Left lung (tissue), 14 donors: ENCODE measurements at regions of chr19 and their contacts with region 1.

Region 1: DNA sequence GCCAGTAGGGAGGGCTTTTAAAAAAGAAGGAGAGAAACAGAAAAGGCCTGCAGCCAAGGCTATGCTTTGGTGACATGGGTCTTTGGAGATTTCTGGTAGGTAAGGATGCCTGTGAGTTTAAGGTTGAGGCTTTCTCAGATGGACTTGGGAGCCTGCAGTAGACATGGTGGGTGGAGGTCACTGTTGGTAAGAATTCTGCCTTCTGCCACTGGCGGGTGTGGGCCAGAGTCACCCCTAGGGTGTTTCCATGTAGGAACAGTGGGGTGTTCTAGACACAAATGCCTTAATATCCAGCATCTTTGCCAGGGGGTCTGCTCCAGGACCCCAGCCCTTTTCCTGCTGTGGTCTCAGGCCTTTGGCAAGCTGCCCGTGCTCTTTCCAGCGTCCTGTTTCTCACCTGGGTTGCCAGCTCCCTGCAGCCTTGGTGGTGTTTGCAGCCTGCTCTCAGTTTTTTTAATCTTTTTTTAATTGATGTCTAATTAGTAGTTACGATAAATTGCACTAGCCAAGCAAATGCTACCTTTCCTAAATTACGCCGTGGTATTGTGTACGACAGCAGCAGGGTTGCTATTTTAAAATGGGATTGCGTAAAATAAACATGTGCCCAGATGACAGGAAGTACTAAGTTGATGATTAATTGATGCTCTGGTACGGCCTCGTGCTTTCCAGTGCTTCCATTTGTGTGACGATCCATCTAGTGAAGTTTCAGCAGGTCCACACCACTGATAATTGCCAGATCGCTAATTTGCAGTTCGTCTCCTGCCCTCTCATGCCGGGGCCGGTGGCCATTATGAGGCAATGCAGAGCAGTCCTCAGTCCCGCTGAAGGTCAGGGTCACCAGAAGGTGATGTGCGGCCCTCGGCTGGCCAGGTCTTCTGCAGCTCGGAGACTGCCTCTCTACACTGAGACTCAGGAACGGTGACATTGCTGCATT is 35.3 kb upstream of the NPAS1 start:
- DNase-seq: no peak
- ATAC-seq: peak; percentile 39
- H3K4me3 ChIP-seq: no peak overlapping the region
- H3K27ac ChIP-seq: peak overlapping the region in 1 of 2 donors; percentile 5
- H3K4me1 ChIP-seq: peaks cover 5 to 49% of the 10 kb centered on the region in 2 donors
- H3K27me3 ChIP-seq: no peaks in the 10 kb centered on the region
- CTCF ChIP-seq: no peak

Region 2: DNA sequence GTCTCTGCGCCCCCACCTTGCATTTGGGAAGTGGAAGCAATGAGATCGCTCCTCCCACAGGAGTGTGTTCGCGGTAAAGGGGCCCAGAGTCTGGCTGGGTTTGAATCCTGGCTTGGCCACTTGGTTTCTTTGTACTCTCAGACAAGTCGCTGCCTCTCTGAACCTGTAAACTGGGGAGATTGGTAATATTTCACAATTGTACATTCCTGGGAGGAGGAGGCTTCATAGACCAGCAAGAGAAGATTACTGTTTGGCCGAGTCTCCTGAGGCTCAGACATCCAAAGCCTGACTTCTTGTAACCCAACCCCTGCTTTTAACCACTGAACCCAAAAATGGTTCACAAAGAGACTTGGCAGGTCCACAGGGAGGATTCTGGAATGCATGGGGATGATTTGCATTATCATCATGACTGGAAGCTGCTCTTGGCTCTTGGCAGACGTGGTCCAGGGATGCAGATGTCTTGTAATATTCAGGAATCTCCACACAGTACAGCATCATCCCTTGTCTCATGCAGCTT is 224.5 kb before region 1 on chr19:
- intact Hi-C with region 1: loop called in 1 of 2 experiments (anchors 5 kb)
- DNase-seq: no peak
- ATAC-seq: peak; percentile 5
- H3K4me3 ChIP-seq: no peak overlapping the region
- H3K27ac ChIP-seq: no peak overlapping the region
- H3K4me1 ChIP-seq: peaks cover 6 to 29% of the 10 kb centered on the region in 2 donors
- H3K27me3 ChIP-seq: no peaks in the 10 kb centered on the region
- CTCF ChIP-seq: no peak

Region 3: GRCh38 chr19:46904114-46905060 is 80.0 kb before region 1 on chr19:
- intact Hi-C with region 1: no loop called
- DNase-seq: peak in 1 of 4 donors; percentile 64
- ATAC-seq: no peak
- H3K4me3 ChIP-seq: no peak overlapping the region
- H3K27ac ChIP-seq: peak overlapping the region; percentile 18 to 67
- H3K4me1 ChIP-seq: peaks cover 29 to 39% of the 10 kb centered on the region in 2 donors
- H3K27me3 ChIP-seq: no peaks in the 10 kb centered on the region
- CTCF ChIP-seq: no peak

Region 4: GRCh38 chr19:46924874-46925547 is 59.3 kb before region 1 on chr19:
- intact Hi-C with region 1: loop called in 1 of 2 experiments (anchors 10 kb)
- DNase-seq: no peak
- ATAC-seq: peak; percentile 85
- H3K4me3 ChIP-seq: no peak overlapping the region
- H3K27ac ChIP-seq: peak overlapping the region; percentile 1 to 60
- H3K4me1 ChIP-seq: peaks cover 27 to 34% of the 10 kb centered on the region in 2 donors
- H3K27me3 ChIP-seq: no peaks in the 10 kb centered on the region
- CTCF ChIP-seq: no peak

Region 5: GRCh38 chr19:47047763-47048405 is 63.5 kb after region 1 on chr19:
- intact Hi-C with region 1: no loop called
- DNase-seq: peak; percentile 59 to 90 (median 80)
- ATAC-seq: peak; percentile 87
- H3K4me3 ChIP-seq: peak overlapping the region; percentile 99 to 100
- H3K27ac ChIP-seq: peak overlapping the region; percentile 72 to 88
- H3K4me1 ChIP-seq: peaks cover 0 to 16% of the 10 kb centered on the region in 2 donors
- H3K27me3 ChIP-seq: no peaks in the 10 kb centered on the region
- CTCF ChIP-seq: no peak

Region 6: DNA sequence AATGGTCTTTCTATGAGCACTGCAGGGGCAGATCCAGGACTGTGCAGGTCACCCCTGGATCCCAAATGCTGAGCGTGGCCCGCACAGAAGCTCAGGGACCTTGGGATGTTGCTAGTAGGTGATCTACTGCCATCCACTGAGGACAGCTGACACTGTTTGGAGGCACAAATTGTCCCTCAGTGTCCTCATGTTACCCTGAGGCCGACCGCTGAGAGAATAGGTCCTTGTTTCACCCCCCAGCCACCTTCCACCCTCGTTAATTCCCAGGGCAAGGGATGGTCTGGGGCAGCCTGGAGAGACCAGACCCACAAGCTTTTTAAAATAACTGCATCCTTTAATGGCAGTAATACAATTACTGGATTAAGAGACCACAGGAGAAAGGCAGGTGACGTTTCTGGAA is 79.5 kb after region 1 on chr19:
- intact Hi-C with region 1: no loop called
- DNase-seq: peak in 1 of 4 donors; percentile 29
- ATAC-seq: no peak
- H3K4me3 ChIP-seq: no peak overlapping the region
- H3K27ac ChIP-seq: no peak overlapping the region
- H3K4me1 ChIP-seq: no peaks in the 10 kb centered on the region
- H3K27me3 ChIP-seq: no peaks in the 10 kb centered on the region
- CTCF ChIP-seq: no peak